ENCODE measurements at regions of chr7 and their contacts with region 1.

Region 1: DNA sequence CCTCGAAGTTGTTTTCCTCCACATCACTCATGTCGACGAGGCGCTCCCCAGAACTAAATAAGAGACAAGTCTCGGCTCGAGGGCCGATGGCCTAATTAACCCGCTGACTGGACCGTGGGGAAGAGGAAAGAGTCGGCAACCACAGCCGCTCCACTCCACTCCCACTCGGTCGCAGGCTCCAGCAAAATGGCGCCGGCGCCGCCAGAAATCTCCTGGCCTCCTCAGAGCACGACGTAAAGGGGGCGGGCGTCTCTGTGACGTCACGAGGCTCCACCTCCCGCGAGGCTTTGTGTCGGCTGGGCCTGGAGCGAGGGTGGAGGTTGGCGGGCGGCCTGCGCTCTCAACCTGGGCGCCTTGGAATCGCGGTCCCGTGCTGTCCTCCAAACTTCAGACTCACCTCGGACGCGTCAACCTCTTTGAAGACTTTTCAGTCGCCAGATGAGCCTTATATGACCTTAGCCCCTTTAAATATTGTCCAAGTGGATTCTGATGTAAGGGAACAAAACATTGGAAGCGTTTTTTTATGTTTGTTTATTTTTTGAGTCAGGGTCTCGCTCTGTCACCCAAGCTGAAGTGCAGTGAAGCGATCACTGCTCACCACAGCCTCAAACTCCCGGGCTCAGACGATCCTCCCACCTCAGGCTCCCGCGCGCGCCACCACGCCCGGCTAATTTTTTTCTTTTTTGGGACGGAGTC is at the start of gene TRA2A:
- DNase-seq: peak; percentile 92
- ATAC-seq: peak; percentile 94
- H3K4me3 ChIP-seq: peak within 1 kb of the TSS; percentile 73
- H3K27ac ChIP-seq: peak within 1 kb of the TSS; percentile 85
- H3K4me1 ChIP-seq: no peaks in the 10 kb centered on the region
- H3K27me3 ChIP-seq: no peaks in the 10 kb centered on the region
- CTCF ChIP-seq: no peak
- POLR2A ChIP-seq: peak; percentile 98
- RAD21 ChIP-seq: no peak
- total RNA-seq, gene TRA2A: 36.4 and 44.3 TPM in 2 replicates

Region 2: DNA sequence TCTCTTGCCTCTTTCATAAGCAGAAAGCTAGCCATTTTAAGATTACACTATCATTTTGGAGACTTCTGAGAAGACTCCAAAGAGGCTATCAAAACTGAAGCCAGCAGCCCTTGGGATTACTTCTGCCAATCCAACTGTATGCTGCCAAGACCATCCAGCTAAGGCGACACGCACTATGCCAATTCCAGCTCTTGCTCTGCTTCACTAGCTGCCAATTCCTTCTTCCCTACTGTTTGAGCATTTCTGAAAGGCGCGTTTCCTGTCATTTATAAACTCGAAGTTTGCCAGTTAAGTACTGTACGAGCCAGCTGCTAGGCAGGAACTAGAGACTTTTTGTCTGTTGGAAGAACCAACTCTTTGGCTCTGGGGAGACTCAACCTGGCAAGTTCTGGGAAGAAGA is 196.3 kb before region 1 on chr7:
- CTCF ChIA-PET with region 1: interaction called, 11 read pairs
- POLR2A ChIA-PET with region 1: no interaction called
- dilution Hi-C with region 1: no loop called
- in situ Hi-C with region 1: no loop called
- intact Hi-C with region 1: no loop called
- DNase-seq: no peak
- ATAC-seq: no peak
- H3K4me3 ChIP-seq: no peak overlapping the region
- H3K27ac ChIP-seq: peak overlapping the region; percentile 41
- H3K4me1 ChIP-seq: peaks cover 20% of the 10 kb centered on the region
- H3K27me3 ChIP-seq: no peaks in the 10 kb centered on the region
- CTCF ChIP-seq: no peak
- POLR2A ChIP-seq: no peak
- RAD21 ChIP-seq: no peak

Region 3: GRCh38 chr7:23474094-23474828 is 57.7 kb before region 1 on chr7:
- CTCF ChIA-PET with region 1: interaction called, 3 read pairs
- POLR2A ChIA-PET with region 1: no interaction called
- dilution Hi-C with region 1: no loop called
- in situ Hi-C with region 1: no loop called
- intact Hi-C with region 1: loop called (anchors 1 kb)
- DNase-seq: peak; percentile 95
- ATAC-seq: peak; percentile 66
- H3K4me3 ChIP-seq: peak overlapping the region; percentile 83
- H3K27ac ChIP-seq: peak overlapping the region; percentile 81
- H3K4me1 ChIP-seq: peaks cover 2% of the 10 kb centered on the region; the same call in 1 of the 2 replicates
- H3K27me3 ChIP-seq: no peaks in the 10 kb centered on the region
- CTCF ChIP-seq: no peak
- POLR2A ChIP-seq: peak; percentile 54
- RAD21 ChIP-seq: no peak

Region 4: GRCh38 chr7:23787272-23787671 is 255.3 kb after region 1 on chr7:
- CTCF ChIA-PET with region 1: no interaction called
- POLR2A ChIA-PET with region 1: no interaction called
- dilution Hi-C with region 1: no loop called
- in situ Hi-C with region 1: no loop called
- intact Hi-C with region 1: no loop called
- DNase-seq: no peak
- ATAC-seq: no peak
- H3K4me3 ChIP-seq: no peak overlapping the region
- H3K27ac ChIP-seq: no peak overlapping the region
- H3K4me1 ChIP-seq: no peaks in the 10 kb centered on the region
- H3K27me3 ChIP-seq: no peaks in the 10 kb centered on the region
- CTCF ChIP-seq: no peak
- POLR2A ChIP-seq: no peak
- RAD21 ChIP-seq: no peak

Measured in IMR-90 (cell line).